Activated naive CD4-positive, alpha-beta T cell treated with anti-CD3 and anti-CD28 coated beads, Interleukin-2, amount 10 ng/mL, durations not matched to agents 7 days and 5 days (primary cell): ENCODE measurements at regions of chr12 and their contacts with region 1.

Region 1: DNA sequence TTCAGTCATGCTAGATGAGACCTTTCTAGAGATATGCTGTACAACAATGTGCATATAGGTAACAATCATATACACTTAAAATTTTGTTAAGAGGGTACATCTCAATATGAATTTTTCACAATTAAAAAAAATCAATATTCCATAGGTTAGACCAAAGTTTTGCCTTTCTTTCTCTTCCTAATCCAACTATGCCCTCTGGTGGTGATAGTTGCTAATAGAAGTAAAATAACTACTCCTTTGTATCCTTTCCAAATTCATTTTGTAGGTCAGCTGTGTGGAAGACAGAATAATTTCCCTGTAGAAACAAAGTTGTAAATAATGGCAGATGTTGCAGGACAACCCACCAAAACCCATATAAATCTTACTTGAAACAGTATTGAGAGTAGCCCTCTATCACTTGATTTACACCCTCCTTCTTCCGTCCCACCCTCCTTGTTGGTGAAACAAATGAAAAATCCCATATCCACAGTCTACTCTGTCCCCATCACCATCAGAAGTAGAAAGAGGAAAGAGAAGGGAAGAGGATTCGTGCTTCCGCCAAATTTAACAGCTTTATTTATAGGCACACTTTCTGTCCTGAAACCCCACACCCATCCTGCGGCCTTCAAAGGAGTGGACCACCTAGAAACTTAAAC is 34.2 kb upstream of the KICS2 start:
- DNase-seq: no peak
- H3K4me3 Mint-ChIP-seq: no peak overlapping the region
- H3K27ac Mint-ChIP-seq: no peak overlapping the region
- H3K4me1 Mint-ChIP-seq: no peaks in the 10 kb centered on the region
- H3K27me3 Mint-ChIP-seq: no peaks in the 10 kb centered on the region

Region 2: GRCh38 chr12:63838411-63838810 is 417.9 kb before region 1 on chr12:
- CTCF ChIA-PET with region 1: interaction called, 19 read pairs
- DNase-seq: no peak
- H3K4me3 Mint-ChIP-seq: no peak overlapping the region
- H3K27ac Mint-ChIP-seq: no peak overlapping the region
- H3K4me1 Mint-ChIP-seq: peaks cover 3% of the 10 kb centered on the region
- H3K27me3 Mint-ChIP-seq: peaks cover 27% of the 10 kb centered on the region

Region 3: GRCh38 chr12:63843721-63844390 is 412.4 kb before region 1 on chr12:
- CTCF ChIA-PET with region 1: interaction called, 19 read pairs
- DNase-seq: peak; percentile 82
- H3K4me3 Mint-ChIP-seq: peak overlapping the region; percentile 56
- H3K27ac Mint-ChIP-seq: no peak overlapping the region
- H3K4me1 Mint-ChIP-seq: peaks cover 9% of the 10 kb centered on the region
- H3K27me3 Mint-ChIP-seq: peaks cover 58% of the 10 kb centered on the region